Adrenal gland (tissue), 19 donors: ENCODE measurements at regions of chr21 and their contacts with region 1.

Region 1: GRCh38 chr21:41953831-41954653 is at the start of gene C2CD2:
- DNase-seq: peak; percentile 80 to 89 (median 84)
- H3K4me3 ChIP-seq: peak within 1 kb of the TSS; percentile 19 to 99 (median 88)
- H3K27ac ChIP-seq: peak within 1 kb of the TSS; percentile 81 to 97 (median 96)
- H3K4me1 ChIP-seq: peaks cover 62 to 64% of the 10 kb centered on the region in 2 donors
- H3K27me3 ChIP-seq: no peaks in the 10 kb centered on the region
- CTCF ChIP-seq: peak in 2 of 6 experiments; percentile 6 to 12
- POLR2A ChIP-seq: peak; percentile 85 to 87
- total RNA-seq, gene C2CD2: 178 to 439 (median 297) TPM

Region 2: GRCh38 chr21:42002421-42002958 is 48.4 kb after region 1 on chr21:
- intact Hi-C with region 1: loop called (anchors 5 to 10 kb)
- DNase-seq: peak; percentile 75 to 90 (median 88)
- H3K4me3 ChIP-seq: no peak overlapping the region
- H3K27ac ChIP-seq: peak overlapping the region; percentile 19 to 89 (median 66)
- H3K4me1 ChIP-seq: peaks cover 11 to 18% of the 10 kb centered on the region in 2 donors
- H3K27me3 ChIP-seq: no peaks in the 10 kb centered on the region
- CTCF ChIP-seq: no peak
- POLR2A ChIP-seq: peak in 1 of 2 donors; percentile 59

Region 3: DNA sequence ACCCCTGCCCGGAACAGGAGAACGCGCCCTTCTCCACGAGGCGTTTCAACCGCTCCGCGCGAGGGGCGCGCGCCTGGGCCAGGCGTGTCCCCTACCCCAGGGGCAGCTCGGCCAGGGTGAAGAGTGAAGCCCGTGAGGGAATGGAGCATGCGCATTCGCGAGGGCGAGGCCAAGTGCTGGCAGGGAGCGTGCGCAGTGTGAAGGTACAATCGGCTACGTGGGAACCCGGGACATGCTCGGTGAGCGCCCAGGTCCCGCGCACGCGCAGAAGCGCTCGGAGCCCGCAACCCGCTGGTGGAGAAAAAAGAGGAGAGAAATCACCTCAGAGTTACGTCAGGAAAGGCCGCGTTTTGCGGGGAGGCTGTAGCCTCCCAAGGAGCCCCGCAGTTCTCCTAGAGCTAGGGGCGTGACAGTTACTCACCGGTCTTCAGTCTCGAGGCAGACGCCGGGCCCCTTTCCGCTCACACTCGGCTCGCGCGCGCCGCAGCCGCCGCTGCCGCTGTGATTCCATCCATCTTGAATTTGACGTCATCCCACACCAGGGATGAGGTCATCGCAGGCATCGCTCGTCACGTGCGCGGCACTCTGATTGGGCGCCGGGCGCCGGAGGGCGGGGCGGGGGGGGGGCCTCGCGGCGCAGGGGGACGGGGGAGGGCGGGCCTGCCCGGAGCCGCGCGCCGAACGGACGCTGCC is 55.9 kb after region 1 on chr21 and contains the start of gene ZBTB21:
- intact Hi-C with region 1: loop called in 1 of 2 experiments (anchors 10 kb)
- DNase-seq: peak; percentile 98 to 99 (median 99)
- H3K4me3 ChIP-seq: peak within 1 kb of the TSS; percentile 55 to 82 (median 66)
- H3K27ac ChIP-seq: peak within 1 kb of the TSS; percentile 93 to 100 (median 98)
- H3K4me1 ChIP-seq: peaks cover 0 to 13% of the 10 kb centered on the region in 2 donors
- H3K27me3 ChIP-seq: no peaks in the 10 kb centered on the region
- CTCF ChIP-seq: no peak
- POLR2A ChIP-seq: peak; percentile 93 to 99
- total RNA-seq, gene ZBTB21: 9.5 to 39.1 (median 14.6) TPM

Region 4: GRCh38 chr21:42039911-42040351 is 85.9 kb after region 1 on chr21:
- intact Hi-C with region 1: no loop called
- DNase-seq: peak in 4 of 7 donors; percentile 61 to 79 (median 72)
- H3K4me3 ChIP-seq: no peak overlapping the region
- H3K27ac ChIP-seq: peak overlapping the region in 4 of 5 donors; percentile 46 to 91 (median 72)
- H3K4me1 ChIP-seq: peaks cover 0 to 19% of the 10 kb centered on the region in 2 donors
- H3K27me3 ChIP-seq: no peaks in the 10 kb centered on the region
- CTCF ChIP-seq: no peak
- POLR2A ChIP-seq: no peak